ENCODE measurements at regions of chr7 and their contacts with region 1.

Region 1: GRCh38 chr7:18792871-18793595 is 297.5 kb downstream of the HDAC9 start:
- DNase-seq: no peak
- ATAC-seq: no peak

Region 2: GRCh38 chr7:18727115-18727870 is 65.7 kb before region 1 on chr7:
- intact Hi-C with region 1: loop called (anchors 10 kb)
- DNase-seq: no peak
- ATAC-seq: no peak

Region 3: GRCh38 chr7:18895456-18895855 is 102.4 kb after region 1 on chr7:
- intact Hi-C with region 1: no loop called
- DNase-seq: no peak
- ATAC-seq: no peak

Region 4: DNA sequence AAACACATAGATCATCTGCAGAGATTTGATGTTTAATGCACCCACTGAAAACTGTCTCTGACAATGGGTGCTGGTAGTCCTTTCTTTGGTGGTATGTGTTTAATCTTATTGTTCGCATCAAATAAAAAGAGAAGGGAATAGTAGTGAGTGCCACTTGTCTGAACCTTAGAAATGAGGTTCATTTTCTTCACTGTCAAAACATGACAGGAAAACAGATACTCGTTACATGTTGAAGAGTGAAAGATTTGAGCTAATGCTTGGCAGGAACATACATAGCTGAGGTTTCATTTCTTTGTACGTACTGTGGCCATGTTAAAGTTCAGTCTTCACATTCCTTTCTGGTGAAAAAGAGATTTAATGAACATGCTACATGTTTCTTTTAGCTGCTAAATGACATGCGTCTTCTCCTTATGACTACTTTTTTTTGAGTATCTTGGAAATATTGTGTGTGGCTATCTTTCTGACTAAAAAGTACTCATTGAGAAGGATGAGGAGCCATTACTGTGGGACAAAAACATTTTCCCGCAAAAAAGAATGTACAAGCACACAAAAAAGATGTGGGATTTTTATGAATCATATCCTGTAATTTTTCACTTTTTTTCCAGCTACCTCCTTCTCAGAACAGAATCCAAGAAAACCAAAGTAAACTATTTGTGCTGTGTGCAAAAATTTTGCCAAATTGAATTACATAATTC is 216.4 kb after region 1 on chr7:
- intact Hi-C with region 1: no loop called
- DNase-seq: no peak
- ATAC-seq: no peak

Measured in Right ventricle myocardium superior (tissue), 1 donor.